CD8-positive, alpha-beta T cell (primary cell): ENCODE measurements at regions of chr17 and their contacts with region 1.

Region 1: DNA sequence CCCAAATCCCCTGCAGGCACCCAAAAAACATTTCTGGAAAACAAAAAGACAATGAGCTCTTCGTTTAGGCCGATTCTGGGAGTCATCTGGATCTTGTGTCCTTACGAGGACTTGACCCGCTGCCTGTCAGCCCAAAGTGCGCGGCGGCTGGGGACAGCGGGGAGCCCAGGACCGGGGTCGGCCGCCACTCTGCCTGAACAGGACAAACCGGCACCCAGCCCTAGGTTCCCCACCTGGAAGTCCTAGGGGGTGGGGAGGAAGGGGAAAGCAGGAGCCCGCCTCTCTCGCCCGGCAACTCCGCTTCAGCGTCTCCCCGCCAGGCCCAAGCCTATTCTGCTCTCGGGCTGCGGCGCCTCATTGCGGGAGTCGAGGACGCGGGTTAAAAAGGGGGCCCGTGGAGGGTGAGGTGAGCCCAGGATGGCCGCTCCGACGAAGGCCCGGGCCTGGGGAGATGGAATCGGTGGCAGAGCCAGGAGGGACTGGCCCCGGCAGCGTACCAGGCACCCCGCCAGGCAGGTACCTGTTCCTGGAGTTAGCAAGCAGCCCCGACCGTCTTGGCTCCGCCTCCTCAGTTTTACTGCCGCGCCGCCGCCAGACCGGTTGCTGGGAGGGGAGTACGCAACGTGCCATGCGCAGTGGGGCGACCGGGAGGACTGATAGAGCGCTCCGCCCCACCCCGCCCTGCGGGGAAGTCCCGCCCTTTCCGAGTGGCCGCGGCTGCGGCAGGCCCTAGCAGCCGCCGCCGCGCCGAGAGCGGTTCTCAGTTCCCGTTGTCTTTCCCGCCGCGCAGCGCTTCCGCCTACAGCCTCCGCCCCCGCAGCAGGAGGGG is at the start of gene STRADA:
- DNase-seq: peak; percentile 97 to 100 (median 99)
- ATAC-seq: peak; percentile 92
- H3K4me3 ChIP-seq: peak within 1 kb of the TSS; percentile 58 to 86
- H3K4me3 Mint-ChIP-seq: peak within 1 kb of the TSS; percentile 88
- H3K27ac ChIP-seq: peak within 1 kb of the TSS; percentile 81 to 91
- H3K27ac Mint-ChIP-seq: peak within 1 kb of the TSS; percentile 94
- H3K4me1 ChIP-seq: peaks cover 14% of the 10 kb centered on the region
- H3K4me1 Mint-ChIP-seq: peaks cover 27% of the 10 kb centered on the region
- H3K27me3 ChIP-seq: no peaks in the 10 kb centered on the region
- H3K27me3 Mint-ChIP-seq: no peaks in the 10 kb centered on the region
- CTCF ChIP-seq: no peak
- total RNA-seq, gene STRADA: 54.7 to 63.6 TPM

Region 2: DNA sequence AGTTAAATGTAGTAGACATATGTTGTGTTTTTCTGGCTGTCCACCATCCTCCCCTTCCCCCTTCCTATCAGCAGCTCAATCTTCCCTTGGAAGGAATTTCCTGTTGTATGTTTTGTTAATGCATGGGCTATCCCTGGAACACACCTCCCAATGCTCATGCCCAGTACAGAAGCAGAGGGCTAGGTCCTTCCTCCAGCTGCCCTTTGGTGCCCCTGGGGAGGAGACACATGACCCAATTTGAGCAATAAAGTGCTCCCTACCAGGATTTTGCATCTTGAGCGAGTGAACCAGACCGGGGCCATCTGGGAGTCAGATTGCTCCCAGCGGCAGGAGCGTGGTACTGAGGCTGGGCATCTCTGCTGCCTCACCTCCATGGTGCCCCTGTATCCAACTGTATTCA is 1534.9 kb before region 1 on chr17:
- CTCF ChIA-PET with region 1: no interaction called
- POLR2A ChIA-PET with region 1: no interaction called
- intact Hi-C with region 1: no loop called
- DNase-seq: no peak
- ATAC-seq: no peak
- H3K4me3 ChIP-seq: no peak overlapping the region
- H3K4me3 Mint-ChIP-seq: no peak overlapping the region
- H3K27ac ChIP-seq: no peak overlapping the region
- H3K27ac Mint-ChIP-seq: no peak overlapping the region
- H3K4me1 ChIP-seq: no peaks in the 10 kb centered on the region
- H3K4me1 Mint-ChIP-seq: no peaks in the 10 kb centered on the region
- H3K27me3 ChIP-seq: no peaks in the 10 kb centered on the region
- H3K27me3 Mint-ChIP-seq: peaks cover 10% of the 10 kb centered on the region
- CTCF ChIP-seq: no peak

Region 3: GRCh38 chr17:63707151-63707550 is 34.3 kb before region 1 on chr17:
- CTCF ChIA-PET with region 1: interaction called, 9 read pairs
- POLR2A ChIA-PET with region 1: interaction called, 30 read pairs
- intact Hi-C with region 1: loop called in 1 of 2 experiments (anchors 1 kb)
- DNase-seq: peak in 6 of 9 experiments; percentile 36 to 76 (median 64)
- ATAC-seq: peak; percentile 58
- H3K4me3 ChIP-seq: peak overlapping the region; percentile 10 to 42
- H3K4me3 Mint-ChIP-seq: peak overlapping the region; percentile 78
- H3K27ac ChIP-seq: peak overlapping the region; percentile 67 to 73
- H3K27ac Mint-ChIP-seq: peak overlapping the region; percentile 94
- H3K4me1 ChIP-seq: peaks cover 85% of the 10 kb centered on the region
- H3K4me1 Mint-ChIP-seq: peaks cover 83% of the 10 kb centered on the region
- H3K27me3 ChIP-seq: no peaks in the 10 kb centered on the region
- H3K27me3 Mint-ChIP-seq: no peaks in the 10 kb centered on the region
- CTCF ChIP-seq: no peak

Region 4: DNA sequence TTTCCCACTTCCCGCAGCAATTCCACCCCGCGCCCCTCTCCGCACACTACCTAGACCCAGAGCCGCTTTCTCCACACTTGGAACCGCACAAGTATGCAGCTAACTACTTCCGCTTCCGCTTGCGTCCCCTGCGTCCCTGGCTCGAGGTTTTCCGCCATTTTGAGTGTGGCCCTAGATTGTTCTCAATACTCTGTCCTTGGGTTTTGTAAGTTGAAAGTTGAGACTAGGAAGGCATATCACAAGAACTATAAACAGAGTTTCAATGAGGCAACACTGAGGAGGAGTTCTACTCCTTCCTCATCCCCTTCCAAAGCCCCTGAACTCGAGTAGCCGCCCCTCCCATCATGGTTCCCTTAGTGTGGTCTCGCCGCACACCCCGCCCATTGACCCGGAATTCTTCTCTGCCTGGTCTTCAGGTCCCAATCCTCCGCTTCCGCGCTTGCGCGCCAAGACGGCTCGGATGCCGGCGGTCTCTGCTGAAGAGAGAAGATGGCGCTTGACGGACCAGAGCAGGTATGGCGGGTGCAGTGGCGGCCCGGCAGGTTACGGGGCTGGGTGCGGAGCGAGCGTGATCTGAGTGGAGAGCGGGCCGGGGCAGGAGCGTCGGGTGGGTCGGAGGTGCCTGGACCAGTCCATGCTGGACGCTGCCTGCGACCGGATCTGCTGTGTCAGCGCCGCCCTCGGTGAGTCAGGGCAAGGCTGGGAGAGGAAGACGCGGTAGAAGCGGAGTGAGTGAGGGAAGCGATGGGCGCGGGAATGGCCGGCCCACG is 85.8 kb after region 1 on chr17 and contains the starts of genes FTSJ3 and PSMC5:
- CTCF ChIA-PET with region 1: no interaction called
- POLR2A ChIA-PET with region 1: interaction called, 3 read pairs
- intact Hi-C with region 1: loop called (anchors 1 kb)
- DNase-seq: peak; percentile 91 to 99 (median 95)
- ATAC-seq: peak; percentile 92
- H3K4me3 ChIP-seq: peak within 1 kb of the TSS; percentile 74 to 75
- H3K4me3 Mint-ChIP-seq: peak within 1 kb of the TSS; percentile 100
- H3K27ac ChIP-seq: peak within 1 kb of the TSS; percentile 66 to 96
- H3K27ac Mint-ChIP-seq: peak within 1 kb of the TSS; percentile 98
- H3K4me1 ChIP-seq: peaks cover 56% of the 10 kb centered on the region
- H3K4me1 Mint-ChIP-seq: peaks cover 81% of the 10 kb centered on the region
- H3K27me3 ChIP-seq: no peaks in the 10 kb centered on the region
- H3K27me3 Mint-ChIP-seq: no peaks in the 10 kb centered on the region
- CTCF ChIP-seq: peak; percentile 51
- total RNA-seq, gene FTSJ3: 60.0 to 70.3 TPM
- total RNA-seq, gene PSMC5: 88.5 to 90.3 TPM

Region 5: DNA sequence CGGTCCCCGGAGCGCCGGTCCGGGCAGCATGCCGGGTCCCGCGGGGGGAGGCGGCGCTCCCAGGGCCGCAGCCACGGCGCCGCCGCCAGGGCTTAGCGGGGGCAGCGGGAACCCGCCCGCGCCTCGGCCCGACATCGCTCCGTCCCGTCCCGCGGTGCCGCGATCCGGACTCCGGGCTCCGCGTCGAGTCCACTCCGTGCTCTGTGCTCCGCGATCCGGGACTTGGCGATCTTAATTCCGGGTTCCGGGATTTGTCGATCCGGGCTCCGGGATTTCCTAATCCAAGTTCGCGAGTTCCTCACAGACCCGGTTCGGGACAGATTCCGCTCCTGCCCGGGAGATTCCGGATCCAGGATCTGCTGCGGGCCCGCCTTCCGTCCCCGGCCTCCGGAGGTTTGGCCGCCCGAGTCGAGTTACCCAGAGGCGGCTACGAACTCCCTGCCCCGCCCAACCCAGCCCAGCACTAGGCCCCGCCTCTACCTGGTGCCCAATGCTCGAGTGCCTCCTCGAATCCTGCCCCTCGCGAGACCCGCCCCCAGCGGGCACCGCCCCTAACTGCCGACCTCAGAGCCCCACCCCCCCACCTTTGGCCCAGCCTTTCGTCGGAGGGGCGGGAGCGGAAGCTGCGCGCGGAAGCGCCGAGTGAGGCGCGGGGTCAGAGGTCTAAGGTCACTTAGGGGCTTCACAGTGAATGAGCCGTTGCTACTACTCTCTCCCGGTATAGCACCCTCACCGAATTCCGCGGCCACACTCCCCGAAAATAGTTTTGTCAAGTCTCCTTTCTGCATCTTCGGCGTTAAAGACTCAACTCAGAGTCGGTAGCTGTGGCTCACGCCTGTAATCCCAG is 101.3 kb after region 1 on chr17 and contains the start of gene SMARCD2:
- CTCF ChIA-PET with region 1: interaction called, 3 read pairs
- POLR2A ChIA-PET with region 1: no interaction called
- intact Hi-C with region 1: loop called in 1 of 2 experiments (anchors 1 kb)
- DNase-seq: peak; percentile 99
- ATAC-seq: peak; percentile 91
- H3K4me3 ChIP-seq: peak within 1 kb of the TSS; percentile 86 to 95
- H3K4me3 Mint-ChIP-seq: peak within 1 kb of the TSS; percentile 92
- H3K27ac ChIP-seq: peak within 1 kb of the TSS; percentile 88 to 95
- H3K27ac Mint-ChIP-seq: peak within 1 kb of the TSS; percentile 92
- H3K4me1 ChIP-seq: peaks cover 43% of the 10 kb centered on the region
- H3K4me1 Mint-ChIP-seq: peaks cover 30% of the 10 kb centered on the region
- H3K27me3 ChIP-seq: no peaks in the 10 kb centered on the region
- H3K27me3 Mint-ChIP-seq: no peaks in the 10 kb centered on the region
- CTCF ChIP-seq: no peak
- total RNA-seq, gene SMARCD2: 121 TPM